ENCODE measurements at regions of chr5 and their contacts with region 1.

Region 1: GRCh38 chr5:74631081-74631953 is 9.2 kb downstream of the ENC1 start:
- DNase-seq: no peak
- H3K4me3 Mint-ChIP-seq: peak overlapping the region; percentile 65
- H3K27ac Mint-ChIP-seq: peak overlapping the region; percentile 94
- H3K4me1 Mint-ChIP-seq: peaks cover 80% of the 10 kb centered on the region
- H3K27me3 Mint-ChIP-seq: no peaks in the 10 kb centered on the region
- CTCF ChIP-seq: no peak

Region 2: GRCh38 chr5:74567461-74567860 is 63.9 kb before region 1 on chr5:
- CTCF ChIA-PET with region 1: no interaction called
- intact Hi-C with region 1: no loop called
- DNase-seq: peak; percentile 52
- H3K4me3 Mint-ChIP-seq: peak overlapping the region; percentile 34
- H3K27ac Mint-ChIP-seq: peak overlapping the region; percentile 5
- H3K4me1 Mint-ChIP-seq: peaks cover 44% of the 10 kb centered on the region
- H3K27me3 Mint-ChIP-seq: no peaks in the 10 kb centered on the region
- CTCF ChIP-seq: no peak

Region 3: GRCh38 chr5:74595143-74595925 is 36.0 kb before region 1 on chr5:
- CTCF ChIA-PET with region 1: interaction called, 7 read pairs
- intact Hi-C with region 1: loop called (anchors 5 kb)
- DNase-seq: peak; percentile 66
- H3K4me3 Mint-ChIP-seq: peak overlapping the region; percentile 7
- H3K27ac Mint-ChIP-seq: peak overlapping the region; percentile 89
- H3K4me1 Mint-ChIP-seq: peaks cover 71% of the 10 kb centered on the region
- H3K27me3 Mint-ChIP-seq: no peaks in the 10 kb centered on the region
- CTCF ChIP-seq: no peak

Region 4: DNA sequence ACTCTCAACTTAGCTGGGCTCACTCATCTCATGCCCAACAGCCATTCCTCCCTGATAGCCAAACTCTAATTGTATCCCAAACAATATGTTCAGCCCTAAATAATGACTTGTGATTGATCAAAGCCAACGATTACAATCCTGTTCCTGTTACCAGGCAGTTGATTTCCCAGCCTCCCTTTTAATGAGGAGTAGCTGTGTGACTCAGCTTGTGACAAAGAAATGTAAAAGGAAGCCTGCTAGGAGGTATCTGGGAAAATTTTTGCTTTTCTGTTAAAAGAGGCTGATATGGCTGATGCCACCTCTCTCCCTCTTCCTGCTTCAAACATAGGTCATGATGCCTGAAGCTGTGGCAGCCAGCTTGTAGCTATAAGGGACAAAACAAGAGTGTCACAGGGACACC is 28.8 kb after region 1 on chr5:
- CTCF ChIA-PET with region 1: no interaction called
- intact Hi-C with region 1: no loop called
- DNase-seq: no peak
- H3K4me3 Mint-ChIP-seq: no peak overlapping the region
- H3K27ac Mint-ChIP-seq: no peak overlapping the region
- H3K4me1 Mint-ChIP-seq: no peaks in the 10 kb centered on the region
- H3K27me3 Mint-ChIP-seq: peaks cover 12% of the 10 kb centered on the region
- CTCF ChIP-seq: no peak